ENCODE measurements at regions of chr6 and their contacts with region 1.

Region 1: DNA sequence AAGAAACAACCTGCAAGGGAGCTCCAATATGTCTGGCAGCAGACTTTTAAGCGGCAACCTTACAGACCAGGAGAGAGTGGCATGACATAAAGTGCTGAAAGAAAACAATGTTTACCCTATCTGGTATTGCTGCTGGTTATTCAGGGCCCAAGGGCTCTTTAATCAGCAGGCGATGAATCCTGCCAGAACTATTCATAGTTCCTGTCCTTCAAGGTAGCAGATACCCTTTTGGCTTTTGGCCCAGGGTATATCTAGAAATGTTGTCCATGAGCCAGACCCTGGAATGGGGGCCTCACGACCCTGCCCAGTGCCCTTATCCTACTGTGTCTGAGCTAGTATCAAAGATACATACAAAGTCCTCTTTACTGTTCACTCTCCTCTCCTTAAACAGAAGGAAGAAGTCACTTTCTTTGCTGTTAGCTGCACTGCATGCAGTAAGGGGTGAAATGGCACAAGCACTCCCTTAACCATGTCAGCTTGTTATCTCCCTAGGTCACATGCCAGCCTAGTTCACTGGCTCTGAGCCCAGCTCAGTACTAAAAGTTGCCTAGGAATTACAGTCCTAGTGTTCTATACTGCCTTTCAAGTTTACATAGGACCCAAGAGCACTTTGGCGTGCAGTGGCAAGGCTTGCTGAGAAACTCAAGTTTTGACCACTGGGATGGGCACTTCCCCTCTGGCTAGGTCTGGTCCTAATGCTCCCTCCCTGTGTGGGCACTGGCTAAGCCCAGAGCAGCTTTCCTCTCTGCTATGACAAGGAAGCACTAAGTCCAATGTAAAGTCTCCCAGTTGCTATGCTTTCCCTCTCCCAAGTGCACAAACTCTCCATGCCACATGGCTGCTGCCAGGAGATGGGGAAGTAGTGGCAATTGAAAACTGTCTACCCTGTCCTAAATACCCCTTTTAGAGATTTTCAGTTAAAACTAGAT is 122.0 kb downstream of the HTR1B start:
- DNase-seq: no peak
- H3K4me3 ChIP-seq: no peak overlapping the region
- H3K27ac ChIP-seq: no peak overlapping the region
- H3K4me1 ChIP-seq: no peaks in the 10 kb centered on the region
- H3K27me3 ChIP-seq: no peaks in the 10 kb centered on the region
- CTCF ChIP-seq: no peak
- EP300 ChIP-seq: no peak
- POLR2A ChIP-seq: no peak

Region 2: DNA sequence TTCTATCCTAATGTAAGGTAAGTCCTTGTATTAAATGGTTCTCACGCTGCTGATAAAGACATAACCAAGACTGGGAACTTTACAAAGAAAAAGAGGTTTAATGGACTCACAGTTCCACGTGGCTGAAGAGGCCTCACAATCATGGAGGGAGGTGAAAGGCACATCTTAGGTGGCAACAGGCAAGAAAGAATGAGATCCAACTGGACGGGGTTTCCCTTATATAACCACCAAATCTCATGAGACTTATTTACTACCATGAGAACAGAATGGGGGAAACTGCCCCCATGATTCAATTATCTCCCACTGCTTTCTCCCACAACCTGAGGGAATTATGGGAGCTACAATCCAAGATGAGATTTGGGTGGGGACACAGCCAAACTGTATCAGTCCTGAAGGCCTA is 14.6 kb before region 1 on chr6:
- in situ Hi-C with region 1: no loop called
- intact Hi-C with region 1: loop called (anchors 1 kb)
- DNase-seq: no peak
- H3K4me3 ChIP-seq: no peak overlapping the region
- H3K27ac ChIP-seq: no peak overlapping the region
- H3K4me1 ChIP-seq: no peaks in the 10 kb centered on the region
- H3K27me3 ChIP-seq: no peaks in the 10 kb centered on the region
- CTCF ChIP-seq: no peak
- EP300 ChIP-seq: no peak
- POLR2A ChIP-seq: no peak